Ovary (tissue), 10 donors: ENCODE measurements at regions of chr11 and their contacts with region 1.

Region 1: DNA sequence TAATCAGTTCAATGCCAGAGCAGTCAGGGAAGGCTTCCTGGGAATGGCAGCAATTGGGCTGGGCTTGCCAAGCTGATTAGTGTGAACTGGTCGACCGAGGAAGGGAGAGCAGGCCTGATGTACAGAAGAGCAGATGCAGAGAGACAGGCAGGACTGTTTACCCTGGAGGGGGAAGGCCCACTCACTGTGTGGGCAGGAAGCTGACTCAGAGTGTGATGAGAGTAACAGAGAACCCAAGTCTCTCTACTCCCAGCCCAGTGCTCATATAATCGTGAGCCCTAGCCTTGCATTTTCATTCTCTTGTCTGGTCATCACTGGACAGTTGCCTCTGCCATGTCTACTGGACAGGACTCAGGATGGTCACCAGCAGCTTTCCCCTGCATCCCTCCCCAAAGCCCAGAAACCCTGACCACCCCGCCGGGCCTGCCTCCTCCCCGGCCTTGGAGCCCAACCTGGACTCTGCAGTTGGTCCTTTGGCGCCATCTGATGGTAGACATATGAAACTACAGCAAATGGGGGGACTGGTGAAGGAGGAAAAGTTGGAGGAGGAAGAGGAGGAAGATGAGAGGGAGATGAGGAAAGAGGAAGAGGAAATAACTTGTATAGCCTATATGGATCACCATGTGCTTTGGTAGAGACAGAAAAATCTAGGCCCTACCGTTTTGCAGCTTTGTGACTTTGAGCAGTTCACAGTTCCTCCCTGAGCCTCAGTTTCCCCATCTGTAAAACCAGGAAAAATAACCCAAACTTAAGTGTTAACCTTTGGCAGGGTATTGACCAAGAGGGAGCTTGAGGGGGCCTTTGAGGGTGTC is 43.4 kb upstream of the PRDM11 start:
- DNase-seq: peak in 3 of 5 donors; percentile 40 to 46 (median 43)
- H3K4me3 ChIP-seq: no peak overlapping the region
- H3K27ac ChIP-seq: no peak overlapping the region
- H3K4me1 ChIP-seq: no peaks in the 10 kb centered on the region
- H3K27me3 ChIP-seq: no peaks in the 10 kb centered on the region
- CTCF ChIP-seq: peak; percentile 58 to 83 (median 79)
- EP300 ChIP-seq: no peak
- POLR2A ChIP-seq: no peak

Region 2: DNA sequence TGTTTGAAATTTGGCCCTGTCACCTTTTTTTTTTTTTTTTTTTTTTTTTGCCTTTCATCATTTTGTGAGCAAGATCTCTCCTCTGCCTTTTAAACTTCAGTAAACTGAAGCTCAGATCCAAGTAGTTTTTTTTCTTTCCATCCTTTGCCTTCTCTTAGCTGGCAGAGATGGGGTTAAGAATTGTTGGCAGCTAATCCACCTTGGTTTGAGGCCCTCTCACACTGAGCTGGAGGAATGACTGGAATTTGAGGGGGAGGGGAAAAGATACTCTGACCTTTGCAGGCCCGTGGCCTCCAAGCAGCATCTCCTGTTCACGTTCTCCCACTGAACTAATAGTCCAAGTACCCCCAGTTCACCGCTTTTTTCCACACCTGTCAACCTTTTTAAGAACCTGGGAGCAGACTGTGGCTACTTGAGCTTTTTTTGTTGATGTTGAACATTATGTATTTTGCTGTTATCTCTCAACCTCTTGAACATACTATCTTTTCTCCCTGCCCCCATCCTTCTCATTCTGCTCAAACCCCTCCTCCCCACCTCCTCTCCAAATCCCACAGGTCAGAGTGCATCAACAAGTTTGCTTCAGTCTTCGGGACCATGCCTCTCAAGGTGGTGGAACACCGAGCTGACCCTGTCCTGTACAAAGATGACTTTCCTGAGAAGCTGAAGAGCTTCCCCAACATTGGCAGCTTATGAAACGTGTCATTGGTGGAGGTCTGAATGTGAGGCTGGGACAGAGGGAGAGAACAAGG is 859.2 kb before region 1 on chr11:
- intact Hi-C with region 1: no loop called
- DNase-seq: no peak
- H3K4me3 ChIP-seq: no peak overlapping the region
- H3K27ac ChIP-seq: no peak overlapping the region
- H3K4me1 ChIP-seq: peaks cover 13% of the 10 kb centered on the region
- H3K27me3 ChIP-seq: no peaks in the 10 kb centered on the region
- CTCF ChIP-seq: no peak
- EP300 ChIP-seq: no peak
- POLR2A ChIP-seq: no peak

Region 3: DNA sequence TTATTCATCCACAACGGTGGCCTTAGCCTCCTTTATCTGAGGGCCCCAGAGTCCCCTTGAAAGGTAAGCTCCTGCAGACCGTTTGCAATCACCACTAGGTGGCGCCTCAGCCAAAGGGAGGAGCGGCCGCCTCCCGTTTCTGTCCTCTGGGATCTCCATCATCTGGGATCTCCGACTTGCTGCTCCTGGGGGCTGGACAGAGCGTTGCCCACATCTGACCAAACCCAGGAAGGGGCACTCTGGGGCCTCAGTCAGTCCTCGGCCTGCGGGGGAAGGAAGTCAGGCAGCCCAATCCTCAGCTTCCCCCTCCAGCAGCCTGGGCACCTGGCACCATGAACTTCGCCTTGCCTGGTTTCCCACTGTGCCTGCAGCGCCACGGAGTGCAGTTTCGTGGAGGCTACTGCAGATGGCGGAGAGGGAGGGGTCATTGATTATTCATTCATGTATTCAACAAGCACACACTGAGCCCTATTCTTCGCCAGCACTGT is 175.8 kb before region 1 on chr11:
- intact Hi-C with region 1: loop called in 1 of 4 experiments (anchors 5 kb)
- DNase-seq: peak; percentile 32 to 74 (median 58)
- H3K4me3 ChIP-seq: no peak overlapping the region
- H3K27ac ChIP-seq: no peak overlapping the region
- H3K4me1 ChIP-seq: no peaks in the 10 kb centered on the region
- H3K27me3 ChIP-seq: no peaks in the 10 kb centered on the region
- CTCF ChIP-seq: peak; percentile 45 to 53 (median 50)
- EP300 ChIP-seq: no peak
- POLR2A ChIP-seq: no peak

Region 4: DNA sequence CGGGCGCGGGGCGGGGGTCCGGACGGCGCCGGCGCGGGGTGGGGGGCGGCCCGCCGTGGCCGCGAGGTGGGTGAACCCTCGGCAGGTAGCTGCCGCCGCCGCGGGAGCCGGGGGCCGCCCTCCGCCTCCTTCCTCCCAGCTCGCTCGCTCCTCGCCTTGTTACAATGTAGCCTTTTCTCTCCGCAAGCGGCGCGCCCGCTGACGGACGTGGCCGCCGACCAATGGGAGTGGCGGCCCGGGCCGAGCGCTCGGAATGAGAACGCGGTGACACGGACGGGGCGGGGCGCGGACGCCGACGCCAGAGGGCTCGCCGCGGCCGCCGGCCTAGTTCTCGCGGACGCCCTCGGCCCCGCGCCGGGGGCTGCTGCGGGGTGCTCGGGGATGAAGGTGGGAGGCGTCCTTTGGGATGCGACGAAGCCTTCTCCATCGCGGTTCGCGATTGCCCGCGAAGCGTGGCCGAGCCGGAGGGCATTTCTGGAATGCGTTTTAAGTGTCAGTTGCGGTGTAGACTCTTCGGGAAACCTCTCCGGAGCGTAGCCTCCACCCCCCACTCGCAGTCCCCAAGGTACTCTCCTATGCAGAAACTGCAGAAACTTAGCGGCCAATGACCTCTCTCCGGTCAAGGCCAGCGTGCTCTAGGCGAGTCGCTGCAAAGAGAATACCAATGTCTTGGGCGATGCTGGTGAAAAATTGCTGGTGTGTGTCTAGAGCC is 44.2 kb after region 1 on chr11:
- intact Hi-C with region 1: no loop called
- DNase-seq: peak; percentile 92 to 96 (median 95)
- H3K4me3 ChIP-seq: peak overlapping the region; percentile 74
- H3K27ac ChIP-seq: peak overlapping the region; percentile 88 to 92
- H3K4me1 ChIP-seq: peaks cover 16% of the 10 kb centered on the region
- H3K27me3 ChIP-seq: no peaks in the 10 kb centered on the region
- CTCF ChIP-seq: no peak
- EP300 ChIP-seq: no peak
- POLR2A ChIP-seq: peak; percentile 63

Region 5: DNA sequence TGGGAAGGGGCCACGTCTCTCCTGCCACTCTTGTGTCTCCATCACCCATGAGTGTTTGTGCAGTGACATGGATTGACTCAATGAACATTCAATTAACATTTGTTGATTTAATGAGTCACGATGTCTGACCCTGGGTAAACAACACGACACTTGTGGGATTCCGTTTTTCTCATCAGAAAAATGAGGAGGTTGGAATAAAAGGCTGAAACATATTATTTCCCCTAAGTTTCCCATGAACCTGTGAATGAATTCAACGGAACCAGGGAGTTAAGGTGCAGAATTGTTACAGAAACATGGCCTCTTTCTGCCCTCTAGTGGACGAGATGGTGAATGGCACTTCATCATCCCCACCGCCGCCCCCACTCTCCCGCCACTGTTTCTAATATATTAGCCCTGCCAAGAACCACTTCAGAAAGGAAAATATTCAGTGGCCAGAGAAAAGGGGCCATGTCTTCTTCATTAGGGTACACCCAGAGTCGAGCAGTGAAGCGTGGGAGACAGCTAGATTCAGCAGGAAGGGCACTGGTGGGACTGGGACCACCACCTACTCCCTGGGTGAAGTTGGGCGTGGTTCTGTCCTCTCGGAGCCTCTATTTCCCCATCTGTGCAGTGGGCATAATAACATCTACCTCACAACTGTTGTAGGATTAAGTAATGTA is 229.4 kb after region 1 on chr11:
- intact Hi-C with region 1: loop called in 1 of 4 experiments (anchors 5 kb)
- DNase-seq: peak; percentile 30 to 67 (median 56)
- H3K4me3 ChIP-seq: peak overlapping the region; percentile 2
- H3K27ac ChIP-seq: peak overlapping the region in 1 of 2 donors; percentile 31
- H3K4me1 ChIP-seq: peaks cover 4% of the 10 kb centered on the region
- H3K27me3 ChIP-seq: no peaks in the 10 kb centered on the region
- CTCF ChIP-seq: peak; percentile 12 to 72 (median 49)
- EP300 ChIP-seq: no peak
- POLR2A ChIP-seq: no peak

Region 6: GRCh38 chr11:45468262-45468856 is 365.3 kb after region 1 on chr11:
- intact Hi-C with region 1: no loop called
- DNase-seq: no peak
- H3K4me3 ChIP-seq: no peak overlapping the region
- H3K27ac ChIP-seq: no peak overlapping the region
- H3K4me1 ChIP-seq: peaks cover 4% of the 10 kb centered on the region
- H3K27me3 ChIP-seq: no peaks in the 10 kb centered on the region
- CTCF ChIP-seq: no peak
- EP300 ChIP-seq: no peak
- POLR2A ChIP-seq: no peak